Left colon (tissue), 2 donors: ENCODE measurements at regions of chr4 and their contacts with region 1.

Region 1: DNA sequence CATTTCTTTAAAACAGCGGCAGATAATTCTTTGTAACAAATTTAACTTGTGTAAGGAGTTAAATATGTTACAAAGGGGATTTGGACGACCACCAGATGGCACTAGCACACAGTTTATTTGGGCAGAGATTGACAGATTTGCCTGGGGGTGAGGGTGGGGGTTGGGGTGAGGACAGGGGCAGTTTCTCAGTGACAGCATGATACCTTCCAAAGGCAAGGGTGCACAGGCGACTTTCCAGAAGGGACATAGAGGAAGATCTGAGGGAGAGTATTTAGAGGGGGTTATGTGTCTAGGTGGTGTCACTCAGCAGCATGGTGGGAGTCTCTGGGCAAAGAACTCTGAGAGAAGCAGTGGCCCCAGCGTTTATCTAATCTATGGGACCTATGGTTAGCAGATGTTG is 9.6 kb upstream of the TMA16 start:
- DNase-seq: peak in 1 of 2 donors; percentile 58
- ATAC-seq: no peak

Region 2: GRCh38 chr4:163263606-163264005 is 221.3 kb before region 1 on chr4:
- intact Hi-C with region 1: no loop called
- DNase-seq: no peak
- ATAC-seq: no peak

Region 3: GRCh38 chr4:163544407-163545038 is 59.6 kb after region 1 on chr4:
- intact Hi-C with region 1: loop called in 1 of 2 experiments (anchors 10 kb)
- DNase-seq: peak in 1 of 2 donors; percentile 70
- ATAC-seq: peak; percentile 79